Mammary epithelial cell (primary cell): ENCODE measurements at regions of chr17 and their contacts with region 1.

Region 1: GRCh38 chr17:879549-880442 is 97.6 kb downstream of the MRM3 start:
- DNase-seq: peak; percentile 91
- H3K4me3 ChIP-seq: no peak overlapping the region
- H3K27ac ChIP-seq: peak overlapping the region; percentile 72
- H3K4me1 ChIP-seq: peaks cover 25% of the 10 kb centered on the region
- H3K27me3 ChIP-seq: no peaks in the 10 kb centered on the region
- CTCF ChIP-seq: peak; percentile 54 to 65

Region 2: DNA sequence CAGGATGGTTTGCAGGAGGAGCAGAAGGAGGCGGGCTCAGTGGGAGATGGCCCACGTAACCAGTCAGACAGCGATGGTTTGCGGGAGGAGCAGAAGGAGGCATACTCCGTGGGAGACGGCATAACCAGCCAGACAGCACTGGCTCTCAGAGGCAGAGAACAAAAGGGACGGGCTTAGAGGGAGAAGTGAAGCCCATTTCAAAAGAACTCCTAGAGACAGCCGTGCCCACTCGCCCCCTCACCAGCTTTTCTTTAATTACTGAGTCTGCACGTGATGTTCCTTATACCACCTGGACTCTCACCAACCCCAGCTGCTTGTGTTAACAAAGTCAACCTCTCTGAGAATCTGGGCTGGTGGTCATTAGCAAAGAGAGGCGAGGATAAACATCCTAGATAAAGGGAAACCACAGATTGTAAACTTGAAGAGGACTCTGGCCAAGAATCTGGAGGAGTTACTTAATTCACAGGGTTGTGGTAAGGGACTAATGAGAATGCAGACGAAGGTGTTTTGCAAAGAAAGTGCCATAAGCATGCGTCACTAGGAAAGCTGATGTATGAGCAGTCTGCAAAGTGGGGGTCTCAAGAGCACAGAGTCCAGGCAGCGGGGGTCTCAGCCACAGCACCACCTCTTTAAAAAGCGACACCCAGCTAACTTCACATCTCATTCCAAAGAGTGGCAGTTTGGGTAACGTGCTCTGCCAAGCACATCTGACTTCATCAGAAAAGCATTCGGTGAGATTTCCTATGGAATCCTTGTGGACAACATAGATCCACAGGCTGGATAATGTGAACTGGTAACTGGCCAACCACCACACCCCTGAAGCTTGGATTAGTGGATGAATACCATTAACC is 48.0 kb after region 1 on chr17:
- CTCF ChIA-PET with region 1: no interaction called
- dilution Hi-C with region 1: no loop called
- in situ Hi-C with region 1: no loop called
- intact Hi-C with region 1: loop called (anchors 1 kb)
- DNase-seq: peak; percentile 87
- H3K4me3 ChIP-seq: peak overlapping the region in 1 of 3 experiments; percentile 1
- H3K27ac ChIP-seq: peak overlapping the region; percentile 95
- H3K4me1 ChIP-seq: peaks cover 66% of the 10 kb centered on the region
- H3K27me3 ChIP-seq: no peaks in the 10 kb centered on the region
- CTCF ChIP-seq: no peak

Region 3: GRCh38 chr17:951325-952132 is 71.7 kb after region 1 on chr17:
- CTCF ChIA-PET with region 1: interaction called, 3 read pairs
- dilution Hi-C with region 1: no loop called
- in situ Hi-C with region 1: no loop called
- intact Hi-C with region 1: loop called (anchors 1 kb)
- DNase-seq: peak; percentile 65
- H3K4me3 ChIP-seq: no peak overlapping the region
- H3K27ac ChIP-seq: peak overlapping the region; percentile 54
- H3K4me1 ChIP-seq: peaks cover 29% of the 10 kb centered on the region
- H3K27me3 ChIP-seq: no peaks in the 10 kb centered on the region
- CTCF ChIP-seq: no peak

Region 4: GRCh38 chr17:962670-963069 is 82.9 kb after region 1 on chr17:
- CTCF ChIA-PET with region 1: no interaction called
- dilution Hi-C with region 1: no loop called
- in situ Hi-C with region 1: no loop called
- intact Hi-C with region 1: no loop called
- DNase-seq: no peak
- H3K4me3 ChIP-seq: no peak overlapping the region
- H3K27ac ChIP-seq: no peak overlapping the region
- H3K4me1 ChIP-seq: no peaks in the 10 kb centered on the region
- H3K27me3 ChIP-seq: no peaks in the 10 kb centered on the region
- CTCF ChIP-seq: no peak